Common myeloid progenitor, CD34-positive (primary cell): ENCODE measurements at regions of chr12 and their contacts with region 1.

Region 1: GRCh38 chr12:40010899-40011774 is 94.7 kb downstream of the SLC2A13 start:
- DNase-seq: peak; percentile 76 to 87 (median 82)
- H3K4me3 ChIP-seq: peak overlapping the region in 5 of 7 experiments; percentile 30 to 76 (median 58)
- H3K27ac ChIP-seq: no peak overlapping the region
- H3K4me1 ChIP-seq: peaks cover 0 to 6% (median 2%) of the 10 kb centered on the region in 4 experiments
- H3K27me3 ChIP-seq: no peaks in the 10 kb centered on the region

Region 2: DNA sequence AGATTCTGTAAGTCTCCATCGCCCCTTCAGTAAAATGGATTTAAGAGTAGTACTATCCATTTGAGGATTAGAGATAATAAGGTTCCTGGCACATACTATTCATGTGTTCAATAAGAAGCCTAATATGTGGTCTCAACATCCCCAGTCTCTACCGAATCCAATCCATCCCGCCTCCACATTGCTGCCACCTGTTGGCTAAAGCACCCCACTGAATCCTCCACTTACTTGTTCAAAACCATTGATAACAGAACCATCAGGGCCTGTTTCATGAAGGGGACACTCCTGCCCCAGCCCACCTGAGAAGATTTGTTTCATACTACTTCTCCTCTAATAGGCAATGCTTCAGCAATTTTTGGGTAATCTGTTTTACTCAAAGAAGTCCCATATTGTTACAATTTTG is 52.8 kb before region 1 on chr12:
- CTCF ChIA-PET with region 1: no interaction called
- POLR2A ChIA-PET with region 1: no interaction called
- DNase-seq: no peak
- H3K4me3 ChIP-seq: no peak overlapping the region
- H3K27ac ChIP-seq: no peak overlapping the region
- H3K4me1 ChIP-seq: no peaks in the 10 kb centered on the region
- H3K27me3 ChIP-seq: no peaks in the 10 kb centered on the region

Region 3: GRCh38 chr12:40032433-40033241 is 21.5 kb after region 1 on chr12:
- CTCF ChIA-PET with region 1: interaction called, 12 read pairs
- POLR2A ChIA-PET with region 1: no interaction called
- DNase-seq: no peak
- H3K4me3 ChIP-seq: no peak overlapping the region
- H3K27ac ChIP-seq: no peak overlapping the region
- H3K4me1 ChIP-seq: no peaks in the 10 kb centered on the region
- H3K27me3 ChIP-seq: no peaks in the 10 kb centered on the region

Region 4: DNA sequence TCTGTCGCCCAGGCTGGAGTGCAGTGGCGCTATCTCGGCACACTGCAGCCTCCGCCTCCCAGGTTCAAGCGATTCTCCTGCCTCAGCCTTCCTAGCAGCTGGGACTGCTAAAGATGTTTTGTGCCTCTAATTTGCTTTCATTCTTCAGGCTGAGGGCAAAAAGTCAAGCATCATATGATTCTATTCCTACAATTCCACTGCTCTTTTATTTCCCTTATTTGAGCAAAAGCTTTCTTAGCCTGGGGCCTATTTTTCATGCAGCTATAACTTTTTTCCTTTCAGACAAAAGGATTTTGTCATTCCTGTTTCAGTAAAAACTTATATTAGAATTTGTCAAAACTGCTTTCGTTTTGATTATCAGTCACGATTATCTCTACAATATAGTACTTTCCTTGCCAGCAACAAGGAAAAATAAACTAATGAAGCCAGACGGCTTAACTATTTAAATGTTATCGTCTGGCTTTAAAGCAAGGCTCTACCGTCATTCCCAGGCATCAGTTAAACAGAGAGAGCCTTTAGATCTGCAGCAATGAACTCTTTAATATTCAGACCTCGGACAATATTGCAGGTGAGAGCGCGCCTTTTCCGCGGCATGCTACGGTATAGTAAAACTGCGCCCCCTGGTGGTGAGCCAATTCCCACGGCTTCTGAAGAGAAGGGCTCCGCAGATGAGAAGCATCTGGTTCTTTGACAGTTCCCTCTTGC is 96.1 kb after region 1 on chr12:
- CTCF ChIA-PET with region 1: interaction called, 65 read pairs
- POLR2A ChIA-PET with region 1: interaction called, 8 read pairs
- DNase-seq: peak; percentile 81 to 91 (median 88)
- H3K4me3 ChIP-seq: peak overlapping the region in 5 of 7 experiments; percentile 3 to 72 (median 43)
- H3K27ac ChIP-seq: no peak overlapping the region
- H3K4me1 ChIP-seq: peaks cover 0 to 17% (median 15%) of the 10 kb centered on the region in 4 experiments
- H3K27me3 ChIP-seq: peaks cover 0 to 6% (median 3%) of the 10 kb centered on the region in 5 experiments

Region 5: GRCh38 chr12:40127408-40127807 is 116.3 kb after region 1 on chr12:
- CTCF ChIA-PET with region 1: no interaction called
- POLR2A ChIA-PET with region 1: no interaction called
- DNase-seq: no peak
- H3K4me3 ChIP-seq: no peak overlapping the region
- H3K27ac ChIP-seq: no peak overlapping the region
- H3K4me1 ChIP-seq: no peaks in the 10 kb centered on the region
- H3K27me3 ChIP-seq: no peaks in the 10 kb centered on the region

Region 6: GRCh38 chr12:40312982-40313576 is 301.9 kb after region 1 on chr12:
- CTCF ChIA-PET with region 1: interaction called, 11 read pairs
- POLR2A ChIA-PET with region 1: no interaction called
- DNase-seq: peak; percentile 24 to 64 (median 51)
- H3K4me3 ChIP-seq: no peak overlapping the region
- H3K27ac ChIP-seq: no peak overlapping the region
- H3K4me1 ChIP-seq: no peaks in the 10 kb centered on the region
- H3K27me3 ChIP-seq: no peaks in the 10 kb centered on the region